ENCODE measurements at regions of chr1 and their contacts with region 1.

Region 1: GRCh38 chr1:115980998-115981993 is 5.0 kb downstream of the SLC22A15 start:
- DNase-seq: peak; percentile 35
- H3K4me3 ChIP-seq: no peak overlapping the region
- H3K27ac ChIP-seq: no peak overlapping the region
- H3K4me1 ChIP-seq: no peaks in the 10 kb centered on the region
- H3K27me3 ChIP-seq: no peaks in the 10 kb centered on the region
- CTCF ChIP-seq: peak; percentile 55

Region 2: DNA sequence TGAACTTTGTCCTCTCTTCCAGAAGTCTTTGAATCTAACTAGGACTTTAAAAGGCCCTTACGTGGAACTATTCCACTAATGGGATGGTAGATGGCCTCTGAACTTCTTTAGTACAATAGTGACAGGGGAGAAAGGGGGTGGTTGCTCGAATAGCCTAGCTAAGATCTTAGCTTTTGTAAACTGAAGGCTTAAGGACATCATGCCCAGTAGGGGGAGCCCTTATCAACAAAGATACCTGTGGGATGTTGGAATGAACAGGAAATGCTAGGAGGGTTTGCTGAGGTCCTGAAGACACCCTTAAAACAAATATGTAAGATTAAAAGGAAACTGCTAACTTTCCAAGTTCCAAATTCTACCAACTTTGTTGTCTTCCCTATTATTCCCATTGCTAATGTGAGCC is 173.6 kb before region 1 on chr1:
- intact Hi-C with region 1: loop called (anchors 2 kb)
- DNase-seq: peak; percentile 83
- H3K4me3 ChIP-seq: no peak overlapping the region
- H3K27ac ChIP-seq: no peak overlapping the region
- H3K4me1 ChIP-seq: no peaks in the 10 kb centered on the region
- H3K27me3 ChIP-seq: no peaks in the 10 kb centered on the region
- CTCF ChIP-seq: peak; percentile 69